BJ (cell line): ENCODE measurements at regions of chr15 and their contacts with region 1.

Region 1: GRCh38 chr15:33132722-33133345 is 61.7 kb downstream of the FMN1 start:
- DNase-seq: no peak
- H3K4me3 ChIP-seq: no peak overlapping the region
- H3K27me3 ChIP-seq: no peaks in the 10 kb centered on the region
- CTCF ChIP-seq: peak; percentile 80

Region 2: DNA sequence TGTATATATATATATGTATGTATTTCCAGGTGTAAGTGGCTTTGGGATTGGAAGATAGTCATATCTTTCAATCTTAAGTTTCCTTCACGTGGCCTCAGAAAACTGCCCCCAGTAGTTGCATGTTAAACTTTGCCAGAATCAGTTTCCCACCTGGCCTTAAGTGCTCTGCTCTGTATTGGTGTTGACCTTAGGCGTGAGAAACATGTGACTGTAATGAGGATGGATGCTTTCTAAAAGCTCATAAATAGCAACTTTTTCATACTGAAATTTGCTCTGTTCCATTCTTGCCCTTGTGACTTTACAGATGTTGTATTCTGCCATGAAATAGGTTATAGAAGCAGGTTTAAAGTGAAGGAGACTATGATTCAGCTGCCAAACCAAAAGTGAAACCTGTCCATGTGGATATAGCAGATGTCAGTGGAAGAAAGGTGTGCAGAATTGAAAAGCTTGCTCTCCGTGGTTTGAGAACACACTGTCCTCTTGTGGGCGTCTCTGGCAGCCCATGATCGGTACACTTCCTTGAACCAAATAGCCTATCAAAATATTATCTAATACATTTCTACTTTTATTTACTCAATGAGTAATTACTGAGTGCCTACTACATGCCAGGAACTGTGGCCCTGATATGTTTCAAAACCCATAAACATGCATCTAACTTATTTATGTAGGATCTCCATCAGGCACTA is 475.5 kb before region 1 on chr15:
- CTCF ChIA-PET with region 1: interaction called, 22 read pairs
- POLR2A ChIA-PET with region 1: no interaction called
- DNase-seq: no peak
- H3K4me3 ChIP-seq: no peak overlapping the region
- H3K27me3 ChIP-seq: no peaks in the 10 kb centered on the region
- CTCF ChIP-seq: no peak

Region 3: GRCh38 chr15:32979710-32980109 is 153.1 kb before region 1 on chr15:
- CTCF ChIA-PET with region 1: no interaction called
- POLR2A ChIA-PET with region 1: no interaction called
- DNase-seq: peak; percentile 85
- H3K4me3 ChIP-seq: no peak overlapping the region
- H3K27me3 ChIP-seq: no peaks in the 10 kb centered on the region
- CTCF ChIP-seq: no peak

Region 4: GRCh38 chr15:33021806-33022389 is 110.9 kb before region 1 on chr15:
- CTCF ChIA-PET with region 1: interaction called, 41 read pairs
- POLR2A ChIA-PET with region 1: no interaction called
- DNase-seq: no peak
- H3K4me3 ChIP-seq: no peak overlapping the region
- H3K27me3 ChIP-seq: no peaks in the 10 kb centered on the region
- CTCF ChIP-seq: peak; percentile 63

Region 5: GRCh38 chr15:33080006-33080405 is 52.8 kb before region 1 on chr15:
- CTCF ChIA-PET with region 1: interaction called, 289 read pairs
- POLR2A ChIA-PET with region 1: no interaction called
- DNase-seq: no peak
- H3K4me3 ChIP-seq: no peak overlapping the region
- H3K27me3 ChIP-seq: no peaks in the 10 kb centered on the region
- CTCF ChIP-seq: no peak

Region 6: DNA sequence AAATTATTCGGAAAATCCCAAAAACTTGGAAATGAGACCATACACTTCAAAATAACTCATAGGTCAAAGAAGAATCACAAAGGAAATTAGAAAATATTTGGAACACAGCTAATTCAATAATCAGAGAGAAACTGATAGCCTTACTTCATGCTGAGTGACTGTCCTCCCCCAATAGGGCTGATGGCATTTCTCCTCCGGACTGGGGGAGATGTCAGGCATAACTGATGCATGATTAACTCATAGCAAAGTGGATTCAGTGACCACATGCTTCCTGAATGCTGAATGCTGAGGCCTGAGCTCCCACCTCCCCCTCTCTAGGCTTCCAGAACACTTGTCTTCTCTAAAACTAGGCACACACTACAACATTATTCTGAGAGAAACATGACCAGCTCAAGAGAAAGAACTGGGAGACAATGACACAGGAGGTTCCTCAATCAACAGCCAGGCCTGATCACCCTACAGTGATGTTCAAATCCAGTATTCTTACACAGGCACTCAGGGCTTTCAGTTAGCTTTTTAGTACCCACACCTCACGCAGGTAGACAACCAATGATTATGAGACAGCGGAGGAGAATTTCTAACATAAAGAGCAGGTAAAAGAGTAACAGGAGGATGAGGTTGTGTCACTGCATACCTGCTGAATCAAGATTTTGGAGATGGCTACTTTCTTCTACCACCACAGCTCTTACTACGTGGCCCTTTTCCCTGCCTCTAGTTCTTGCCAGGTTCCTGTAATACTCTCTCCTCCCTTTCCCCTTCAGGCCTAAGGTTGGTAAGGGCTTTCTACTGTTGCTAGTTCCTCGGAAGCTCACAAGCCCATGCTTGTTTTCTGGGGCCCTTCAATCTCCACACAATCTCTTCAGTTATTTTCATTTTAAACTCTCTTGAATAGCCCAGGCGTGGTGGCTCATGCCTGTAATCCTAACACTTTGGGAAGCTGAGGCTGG is 34.5 kb before region 1 on chr15:
- CTCF ChIA-PET with region 1: interaction called, 289 read pairs
- POLR2A ChIA-PET with region 1: no interaction called
- DNase-seq: no peak
- H3K4me3 ChIP-seq: no peak overlapping the region
- H3K27me3 ChIP-seq: no peaks in the 10 kb centered on the region
- CTCF ChIP-seq: no peak

Region 7: DNA sequence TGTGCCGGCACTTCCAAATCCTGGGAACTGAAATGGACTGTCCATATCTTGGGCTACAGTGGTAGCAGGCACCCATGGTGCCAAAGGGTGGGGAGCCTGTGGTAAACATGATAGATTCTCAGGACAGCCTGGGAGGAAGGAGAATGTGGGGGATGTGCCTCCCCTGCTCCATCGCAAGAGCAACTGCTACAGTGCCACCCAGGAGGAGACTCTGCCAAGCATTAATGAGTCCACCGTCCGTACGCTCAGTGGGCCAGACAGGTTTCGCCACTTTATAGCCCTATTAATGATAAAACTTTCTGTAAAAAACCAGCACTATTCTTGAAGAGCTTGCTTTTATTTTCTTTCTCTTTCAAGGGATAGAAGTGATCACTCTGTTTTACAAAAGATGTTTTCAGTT is 13.6 kb before region 1 on chr15:
- CTCF ChIA-PET with region 1: interaction called, 10 read pairs
- POLR2A ChIA-PET with region 1: no interaction called
- DNase-seq: no peak
- H3K4me3 ChIP-seq: no peak overlapping the region
- H3K27me3 ChIP-seq: no peaks in the 10 kb centered on the region
- CTCF ChIP-seq: no peak